HepG2 (cell line): ENCODE measurements at regions of chr17 and their contacts with region 1.

Region 1: DNA sequence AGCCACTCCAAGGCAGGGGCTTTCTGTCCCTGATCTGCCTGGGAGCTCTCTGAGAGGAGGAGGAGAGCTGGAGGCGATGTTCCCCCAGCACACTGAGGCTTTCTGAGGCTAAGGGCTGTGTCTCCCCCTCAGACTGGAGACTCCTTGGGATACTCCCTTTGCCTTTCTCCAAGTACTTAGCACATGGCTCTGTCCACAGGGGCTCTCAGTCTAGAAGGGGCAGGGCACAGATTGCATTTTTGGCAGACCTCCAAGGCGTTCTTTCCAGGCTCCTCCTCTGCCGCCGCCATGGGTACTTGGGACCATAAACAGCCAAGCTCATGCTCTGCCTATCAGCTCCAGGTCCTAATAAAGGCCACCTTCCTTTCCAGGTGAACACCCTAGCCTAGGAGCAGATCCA is 1.8 kb upstream of the GIP start:
- DNase-seq: no peak
- ATAC-seq: no peak
- H3K4me3 ChIP-seq: no peak overlapping the region
- H3K27ac ChIP-seq: peak overlapping the region; percentile 79
- H3K4me1 ChIP-seq: peaks cover 56% of the 10 kb centered on the region
- H3K27me3 ChIP-seq: no peaks in the 10 kb centered on the region
- CTCF ChIP-seq: no peak
- EP300 ChIP-seq: no peak
- POLR2A ChIP-seq: no peak
- RAD21 ChIP-seq: no peak

Region 2: GRCh38 chr17:48928876-48929811 is 41.1 kb before region 1 on chr17:
- CTCF ChIA-PET with region 1: no interaction called
- POLR2A ChIA-PET with region 1: interaction called, 14 read pairs
- in situ Hi-C with region 1: no loop called
- intact Hi-C with region 1: no loop called
- DNase-seq: no peak
- ATAC-seq: no peak; the same call in 2 of the 3 replicates
- H3K4me3 ChIP-seq: no peak overlapping the region
- H3K27ac ChIP-seq: no peak overlapping the region
- H3K4me1 ChIP-seq: peaks cover 21% of the 10 kb centered on the region
- H3K27me3 ChIP-seq: no peaks in the 10 kb centered on the region
- CTCF ChIP-seq: no peak
- EP300 ChIP-seq: no peak
- POLR2A ChIP-seq: peak; percentile 15 to 36; a peak in 2 of 4 replicates
- RAD21 ChIP-seq: no peak

Region 3: DNA sequence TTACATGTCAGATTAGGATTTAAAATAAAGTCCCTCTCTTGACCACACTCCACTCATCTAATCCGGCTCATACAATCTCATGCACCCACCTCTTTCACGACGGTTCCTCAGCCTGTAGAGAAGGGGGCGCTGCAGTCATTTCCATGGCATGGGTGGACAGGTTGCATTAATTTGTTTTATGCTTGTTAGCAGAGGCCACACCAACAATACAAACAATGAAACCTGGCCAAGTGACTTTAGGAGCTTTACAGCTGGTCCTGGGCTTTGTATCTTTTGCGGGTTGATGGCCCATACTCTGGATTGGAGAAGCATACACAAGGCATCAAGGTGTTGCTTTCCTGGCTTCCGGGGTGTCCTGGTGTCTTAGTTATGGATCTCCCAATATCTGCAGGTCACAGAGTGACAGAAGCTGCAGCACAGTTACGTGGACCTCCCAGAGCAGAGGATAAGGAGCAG is 15.9 kb before region 1 on chr17:
- CTCF ChIA-PET with region 1: no interaction called
- POLR2A ChIA-PET with region 1: interaction called, 195 read pairs
- in situ Hi-C with region 1: no loop called
- intact Hi-C with region 1: no loop called
- DNase-seq: peak; percentile 79
- ATAC-seq: peak; percentile 96
- H3K4me3 ChIP-seq: peak overlapping the region in 2 of 3 experiments; percentile 1 to 61; a peak in 3 of 6 replicates
- H3K27ac ChIP-seq: no peak overlapping the region
- H3K4me1 ChIP-seq: peaks cover 38% of the 10 kb centered on the region
- H3K27me3 ChIP-seq: no peaks in the 10 kb centered on the region
- CTCF ChIP-seq: peak; percentile 96
- EP300 ChIP-seq: no peak
- POLR2A ChIP-seq: no peak
- RAD21 ChIP-seq: peak; percentile 99

Region 4: GRCh38 chr17:48997083-48997826 is 27.0 kb after region 1 on chr17 and contains the start of gene IGF2BP1:
- CTCF ChIA-PET with region 1: no interaction called
- POLR2A ChIA-PET with region 1: interaction called, 268 read pairs
- in situ Hi-C with region 1: no loop called
- intact Hi-C with region 1: no loop called
- DNase-seq: peak; percentile 81
- ATAC-seq: peak; percentile 39
- H3K4me3 ChIP-seq: peak within 1 kb of the TSS; percentile 87 to 97 (median 90)
- H3K27ac ChIP-seq: peak within 1 kb of the TSS; percentile 95
- H3K4me1 ChIP-seq: peaks cover 24% of the 10 kb centered on the region
- H3K27me3 ChIP-seq: peaks cover 0 to 3% of the 10 kb centered on the region in 2 experiments; a peak in 1 of 5 replicates
- CTCF ChIP-seq: 0 out of 2 replicates have a peak, but pooled peaks have one; percentile 2
- EP300 ChIP-seq: peak in 1 of 2 experiments; percentile 5; a peak in 1 of 4 replicates
- POLR2A ChIP-seq: peak; percentile 57 to 70
- RAD21 ChIP-seq: peak; percentile 26
- total RNA-seq, gene IGF2BP1: 75.1 and 116 TPM in 2 replicates

Region 5: GRCh38 chr17:49016788-49017463 is 46.7 kb after region 1 on chr17:
- CTCF ChIA-PET with region 1: no interaction called
- POLR2A ChIA-PET with region 1: interaction called, 15 read pairs
- in situ Hi-C with region 1: no loop called
- intact Hi-C with region 1: no loop called
- DNase-seq: no peak
- ATAC-seq: no peak
- H3K4me3 ChIP-seq: no peak overlapping the region
- H3K27ac ChIP-seq: no peak overlapping the region
- H3K4me1 ChIP-seq: peaks cover 92% of the 10 kb centered on the region
- H3K27me3 ChIP-seq: no peaks in the 10 kb centered on the region
- CTCF ChIP-seq: no peak
- EP300 ChIP-seq: no peak
- POLR2A ChIP-seq: 0 out of 4 replicates have a peak, but pooled peaks of 1 of the 2 experiments have one; percentile 17
- RAD21 ChIP-seq: no peak